Activated T-helper 1 cell treated with anti-CD3 and anti-CD28 coated beads, Interleukin-12 subunit alpha, Interleukin-12 subunit beta, Interleukin-2, Interleukin-4 antibody, amounts not matched to agents 30 ng/mL and 10 ng/mL and 1 ng/mL, durations not matched to agents 14 hours and 24 hours and 36 hours (primary cell): ENCODE measurements at regions of chr1 and their contacts with region 1.

Region 1: GRCh38 chr1:234730770-234731568 is 121.0 kb upstream of the IRF2BP2 start:
- DNase-seq: peak; percentile 49
- H3K4me3 Mint-ChIP-seq: peak overlapping the region; percentile 55
- H3K27ac Mint-ChIP-seq: peak overlapping the region; percentile 97
- H3K4me1 Mint-ChIP-seq: peaks cover 75% of the 10 kb centered on the region
- H3K27me3 Mint-ChIP-seq: no peaks in the 10 kb centered on the region

Region 2: GRCh38 chr1:234599617-234600417 is 131.2 kb before region 1 on chr1:
- intact Hi-C with region 1: loop called (anchors 2 kb)
- DNase-seq: peak; percentile 69
- H3K4me3 Mint-ChIP-seq: peak overlapping the region; percentile 88
- H3K27ac Mint-ChIP-seq: peak overlapping the region; percentile 96
- H3K4me1 Mint-ChIP-seq: peaks cover 56% of the 10 kb centered on the region
- H3K27me3 Mint-ChIP-seq: no peaks in the 10 kb centered on the region

Region 3: DNA sequence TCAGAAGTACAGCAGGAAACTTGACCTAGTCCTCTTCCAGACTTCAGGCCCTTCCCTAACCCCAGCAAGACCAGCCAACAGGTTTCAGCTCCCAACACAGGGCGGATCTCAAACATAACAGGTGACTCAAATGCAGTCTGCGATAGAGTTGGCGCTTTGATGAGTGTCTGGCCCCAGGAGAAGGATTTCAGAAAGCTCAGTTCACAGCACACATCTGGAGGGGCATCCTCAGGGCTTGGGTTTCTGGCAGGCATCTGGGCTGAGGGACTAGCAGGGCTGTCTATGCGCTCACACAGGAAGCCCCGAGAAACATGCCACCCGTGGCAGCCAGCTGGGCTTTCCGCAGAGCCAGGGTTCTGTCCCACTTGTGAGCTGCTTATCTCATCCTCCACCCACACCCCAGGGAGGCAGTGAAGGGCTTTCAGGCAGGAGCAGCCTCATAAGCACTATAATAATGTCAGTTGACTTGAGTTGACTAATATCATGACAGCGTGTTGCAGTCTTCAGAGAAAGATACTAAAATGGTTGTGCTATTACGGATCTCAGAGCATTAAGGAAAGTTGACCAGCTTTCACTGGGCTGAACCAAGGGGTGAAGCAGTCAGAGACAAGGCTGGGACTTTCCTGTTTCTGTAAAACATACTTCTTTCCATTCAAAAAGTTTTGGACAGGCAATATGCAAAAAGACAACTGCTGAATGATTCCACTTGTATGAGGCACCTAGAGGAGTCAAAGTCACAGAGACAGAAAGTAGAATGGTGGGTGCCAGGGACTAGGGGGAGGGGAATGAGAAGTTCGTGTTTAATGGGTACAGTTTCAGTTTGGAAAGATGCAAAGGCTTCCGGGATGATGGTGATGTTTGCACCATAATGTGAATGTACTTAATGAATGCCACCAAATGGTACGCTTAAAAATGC is 112.0 kb after region 1 on chr1:
- intact Hi-C with region 1: loop called (anchors 1 kb)
- DNase-seq: peak; percentile 67
- H3K4me3 Mint-ChIP-seq: peak overlapping the region; percentile 54
- H3K27ac Mint-ChIP-seq: peak overlapping the region; percentile 90
- H3K4me1 Mint-ChIP-seq: peaks cover 96% of the 10 kb centered on the region
- H3K27me3 Mint-ChIP-seq: peaks cover 3% of the 10 kb centered on the region

Region 4: DNA sequence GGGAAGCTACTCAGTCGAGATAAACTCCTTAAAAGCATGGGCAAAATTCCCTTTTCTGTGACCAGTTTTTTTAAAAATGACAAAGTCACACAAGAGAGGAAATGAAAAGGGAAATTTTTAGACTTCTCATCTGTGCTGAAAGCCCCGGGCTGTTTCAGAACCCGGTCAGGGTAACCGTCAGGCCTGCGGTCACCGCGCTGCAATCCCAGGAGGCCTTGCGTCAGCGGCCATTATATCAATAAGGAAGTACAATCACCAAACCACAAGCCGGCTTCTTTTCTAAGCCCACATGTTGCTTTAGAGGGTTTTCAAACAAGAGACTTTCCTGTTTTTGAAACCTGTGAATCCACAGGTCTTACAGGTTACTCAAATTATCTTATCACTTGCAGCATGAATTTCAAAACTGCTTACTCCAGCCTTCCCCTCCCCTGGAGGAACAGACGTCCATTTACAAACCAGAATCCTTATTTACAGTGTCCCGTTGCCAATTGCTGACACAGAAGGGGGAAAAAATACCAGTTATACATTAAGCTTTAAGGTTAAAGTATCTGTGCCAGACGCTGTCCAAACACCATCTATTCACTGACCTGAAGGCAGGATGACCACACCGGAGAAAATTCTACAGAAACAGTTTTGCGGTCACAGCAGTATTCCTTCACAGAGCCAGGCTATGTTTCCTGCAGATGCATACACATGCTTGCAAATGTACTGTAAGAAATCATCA is 232.4 kb after region 1 on chr1:
- intact Hi-C with region 1: loop called (anchors 1 kb)
- DNase-seq: peak; percentile 87
- H3K4me3 Mint-ChIP-seq: peak overlapping the region; percentile 73
- H3K27ac Mint-ChIP-seq: peak overlapping the region; percentile 93
- H3K4me1 Mint-ChIP-seq: peaks cover 76% of the 10 kb centered on the region
- H3K27me3 Mint-ChIP-seq: no peaks in the 10 kb centered on the region

Region 5: GRCh38 chr1:235006132-235006943 is 275.4 kb after region 1 on chr1:
- intact Hi-C with region 1: loop called (anchors 1 kb)
- DNase-seq: peak; percentile 37
- H3K4me3 Mint-ChIP-seq: peak overlapping the region; percentile 20
- H3K27ac Mint-ChIP-seq: peak overlapping the region; percentile 81
- H3K4me1 Mint-ChIP-seq: peaks cover 83% of the 10 kb centered on the region
- H3K27me3 Mint-ChIP-seq: no peaks in the 10 kb centered on the region

Region 6: DNA sequence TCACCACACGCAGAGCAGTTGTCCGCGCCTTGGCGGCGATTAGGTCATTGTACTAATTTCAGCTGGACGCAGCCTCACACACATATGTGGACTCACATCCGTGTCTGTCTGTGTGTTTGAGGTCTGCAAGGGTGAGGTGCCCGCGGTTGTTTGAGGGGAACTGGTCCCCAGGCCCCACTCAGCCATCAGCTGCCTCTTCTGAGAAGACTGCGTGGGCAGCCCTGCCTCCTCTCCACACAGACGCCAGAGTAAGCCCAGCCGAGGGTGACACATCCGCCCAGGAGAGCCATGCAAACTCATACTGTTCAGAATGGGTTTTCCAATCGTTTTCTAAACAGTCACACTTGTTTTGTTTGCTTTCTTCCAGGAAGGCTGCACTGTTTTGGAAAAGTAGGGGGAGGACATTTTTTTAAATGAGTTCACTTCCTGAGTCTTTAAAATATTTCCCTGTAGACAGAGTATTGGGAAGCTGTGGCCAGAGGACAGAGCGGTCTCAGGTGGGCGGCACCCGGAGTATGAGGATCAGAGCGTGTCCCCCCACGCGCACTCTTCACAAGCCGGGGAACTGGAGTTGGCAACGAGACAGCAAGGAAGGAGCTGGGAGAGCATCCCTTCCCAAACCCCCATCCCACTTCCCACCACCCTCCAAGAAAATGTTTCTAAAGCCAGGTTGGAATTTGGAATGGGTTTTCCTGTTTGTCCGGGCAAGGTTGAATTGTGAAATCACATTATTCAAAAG is 344.4 kb after region 1 on chr1:
- intact Hi-C with region 1: loop called (anchors 1 kb)
- DNase-seq: peak; percentile 34
- H3K4me3 Mint-ChIP-seq: peak overlapping the region; percentile 71
- H3K27ac Mint-ChIP-seq: peak overlapping the region; percentile 99
- H3K4me1 Mint-ChIP-seq: peaks cover 42% of the 10 kb centered on the region
- H3K27me3 Mint-ChIP-seq: no peaks in the 10 kb centered on the region